Heart right ventricle (tissue), 16 donors: ENCODE measurements at regions of chr2 and their contacts with region 1.

Region 1: DNA sequence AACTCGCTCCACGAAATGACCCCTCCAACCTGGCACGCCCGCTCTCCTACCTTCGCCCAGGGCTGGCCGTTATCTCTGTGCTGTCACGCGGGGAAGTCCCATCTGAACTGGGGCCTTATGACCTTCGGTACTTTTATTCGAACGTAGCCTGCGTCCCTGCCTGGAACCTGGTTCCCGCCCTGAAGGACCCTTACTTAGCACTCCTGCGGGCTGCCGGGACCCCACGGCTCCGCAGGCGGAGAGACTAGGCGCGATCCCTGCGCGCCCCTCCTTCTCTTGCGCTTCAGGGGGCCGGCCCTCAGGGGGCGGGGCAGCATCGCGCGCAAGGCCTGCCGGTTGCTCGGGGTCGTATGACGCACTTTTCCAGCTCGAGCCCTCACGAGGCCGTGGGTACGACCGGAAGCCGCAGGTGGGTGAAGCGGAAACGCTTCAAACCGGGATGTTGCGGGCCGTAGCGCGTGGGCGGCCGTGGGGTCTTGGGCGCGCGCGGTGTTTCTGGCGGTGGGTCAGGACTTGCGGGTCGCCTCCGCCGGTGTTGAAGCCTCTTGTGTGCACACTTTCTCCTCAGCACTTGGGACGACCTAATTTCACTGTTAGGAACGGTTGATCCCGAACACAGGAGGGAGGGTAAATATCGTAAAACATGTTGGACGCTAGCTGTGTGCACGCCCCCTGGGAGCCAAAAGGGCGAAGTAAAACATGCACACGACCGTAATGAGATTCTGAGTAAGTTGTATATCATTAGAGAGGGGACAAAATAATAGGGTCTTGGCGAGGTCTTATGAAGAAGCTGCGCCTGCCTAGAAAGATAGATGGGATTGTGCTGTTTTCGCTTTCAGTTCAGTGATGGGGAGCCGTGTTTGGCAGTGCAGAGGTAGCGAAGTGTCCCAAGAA is at the starts of genes LIPT1 and TSGA10:
- DNase-seq: peak; percentile 90 to 93
- ATAC-seq: peak; percentile 98 to 100 (median 99)
- H3K4me3 ChIP-seq: peak within 1 kb of the TSS; percentile 64 to 85 (median 70)
- H3K27ac ChIP-seq: peak within 1 kb of the TSS; percentile 45 to 93 (median 88)
- H3K4me1 ChIP-seq: peaks cover 0 to 28% (median 22%) of the 10 kb centered on the region in 9 donors
- H3K27me3 ChIP-seq: no peaks in the 10 kb centered on the region
- CTCF ChIP-seq: peak in 2 of 9 donors; percentile 10 to 17
- total RNA-seq, gene LIPT1: 6.2 to 10.1 (median 7.6) TPM
- total RNA-seq, gene TSGA10: 1.4 to 4.1 (median 3.0) TPM

Region 2: DNA sequence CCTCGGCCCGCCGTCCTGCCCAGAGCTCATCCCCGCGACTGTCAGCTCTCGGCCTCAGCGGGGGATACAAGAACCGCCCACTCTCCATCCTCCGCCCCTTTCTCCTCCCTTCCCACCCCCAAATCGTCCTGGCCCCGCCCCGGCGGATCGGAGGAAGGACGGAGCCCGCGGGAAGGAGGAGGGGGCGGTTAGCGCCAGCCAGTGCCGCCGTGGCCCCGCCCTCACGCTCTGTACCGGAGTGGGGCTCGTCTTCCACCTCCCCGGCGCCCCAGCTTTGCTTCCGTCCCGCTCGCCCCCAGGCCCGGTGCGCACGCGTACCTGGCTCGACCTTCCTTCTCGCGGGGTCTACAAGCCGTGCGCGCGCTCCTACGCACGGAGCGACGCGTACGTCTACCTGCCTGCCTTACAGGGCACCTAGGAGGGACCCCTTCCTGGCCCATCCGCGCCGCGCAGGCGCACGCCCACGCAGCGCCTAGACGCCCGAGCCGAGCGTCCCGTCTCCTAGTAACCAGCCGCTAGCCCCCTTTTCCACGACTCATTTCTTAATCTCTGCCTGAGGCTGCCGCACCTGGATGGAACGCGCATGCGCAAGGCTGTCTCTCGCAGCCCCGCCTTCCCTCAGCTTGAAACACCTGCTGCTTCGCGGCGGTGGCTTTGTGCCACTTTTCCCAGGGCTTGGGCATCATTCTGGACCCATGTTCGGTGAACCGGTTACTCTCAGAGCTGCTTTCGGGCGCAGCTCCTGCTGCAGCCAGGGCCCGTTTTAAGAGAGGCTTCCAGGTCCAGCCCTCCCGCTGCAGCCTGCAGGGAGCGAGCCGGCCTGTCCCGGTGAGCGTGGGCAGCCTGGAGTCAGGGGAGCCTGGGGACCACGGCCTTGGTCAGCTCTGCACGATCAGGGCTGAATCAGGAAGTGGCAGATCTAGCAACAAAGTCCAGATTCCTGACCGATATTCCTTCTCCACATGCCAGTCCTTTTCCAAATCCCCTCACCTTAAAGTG is 13.5 kb before region 1 on chr2 and contains the start of gene C2orf15:
- intact Hi-C with region 1: loop called in 1 of 10 experiments (anchors 2 kb)
- DNase-seq: peak; percentile 92
- ATAC-seq: peak; percentile 97 to 99 (median 98)
- H3K4me3 ChIP-seq: peak within 1 kb of the TSS; percentile 68 to 99 (median 88)
- H3K27ac ChIP-seq: peak within 1 kb of the TSS; percentile 13 to 82 (median 72)
- H3K4me1 ChIP-seq: peaks cover 0 to 19% (median 12%) of the 10 kb centered on the region in 9 donors
- H3K27me3 ChIP-seq: no peaks in the 10 kb centered on the region
- CTCF ChIP-seq: no peak
- total RNA-seq, gene C2orf15: 0.23 to 0.30 (median 0.28) TPM in 3 of 10 donors, not detected in the others